ENCODE measurements at regions of chr1 and their contacts with region 1.

Region 1: DNA sequence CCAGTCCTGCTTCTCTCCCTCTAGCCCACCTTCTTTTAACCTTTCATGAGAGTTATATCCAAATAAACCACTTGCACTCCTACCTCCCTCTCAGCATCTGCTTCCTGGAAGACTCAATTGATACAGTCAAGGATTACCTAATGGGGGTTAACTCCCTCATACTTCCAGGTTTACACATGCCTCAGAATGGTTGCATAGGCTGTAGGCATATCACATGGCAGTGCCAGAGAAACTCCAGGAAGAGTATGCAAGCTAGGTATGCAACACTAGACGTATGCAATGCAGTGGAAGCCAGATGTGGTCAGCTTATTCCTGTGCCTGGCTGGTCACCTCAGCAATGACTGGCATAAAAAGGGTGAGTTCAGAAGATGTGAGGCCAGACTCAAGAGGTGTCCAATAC is 32.7 kb upstream of the VANGL1 start:
- DNase-seq: no peak
- CTCF ChIP-seq: no peak

Region 2: GRCh38 chr1:115706587-115707425 is 97.8 kb after region 1 on chr1:
- in situ Hi-C with region 1: loop called (anchors 5 kb)
- DNase-seq: peak; percentile 48
- CTCF ChIP-seq: peak; percentile 36

Region 3: DNA sequence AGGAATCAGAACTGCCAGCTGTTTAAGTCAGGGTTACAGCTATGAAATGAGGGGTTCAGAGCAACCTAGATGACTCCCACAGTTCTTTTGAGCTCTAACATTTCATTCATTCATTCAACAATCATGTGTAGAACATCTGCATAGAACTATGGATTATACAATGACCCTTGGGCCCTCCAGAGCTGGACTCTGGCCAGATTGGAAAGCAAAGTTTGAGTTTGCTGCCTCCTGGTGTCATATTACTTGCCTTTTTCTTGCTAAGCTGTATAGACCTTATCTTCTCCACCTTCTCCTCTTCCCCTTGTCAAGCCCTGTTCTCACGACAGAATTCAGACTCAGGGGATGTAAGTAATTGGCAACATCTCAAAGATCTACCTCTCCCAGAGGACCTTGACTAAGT is 155.5 kb after region 1 on chr1:
- in situ Hi-C with region 1: loop called (anchors 5 kb)
- DNase-seq: no peak
- CTCF ChIP-seq: no peak

Measured in GM13976 (cell line).